MCF 10A (cell line): ENCODE measurements at regions of chr10 and their contacts with region 1.

Region 1: GRCh38 chr10:91420868-91421267 is 10.7 kb downstream of the HECTD2 start:
- DNase-seq: peak; percentile 60
- H3K4me3 Mint-ChIP-seq: peak overlapping the region; percentile 8
- H3K27ac Mint-ChIP-seq: no peak overlapping the region
- H3K4me1 Mint-ChIP-seq: peaks cover 13% of the 10 kb centered on the region
- H3K27me3 Mint-ChIP-seq: no peaks in the 10 kb centered on the region
- CTCF ChIP-seq: no peak

Region 2: GRCh38 chr10:91381257-91381891 is 39.5 kb before region 1 on chr10:
- CTCF ChIA-PET with region 1: no interaction called
- POLR2A ChIA-PET with region 1: no interaction called
- intact Hi-C with region 1: no loop called
- DNase-seq: no peak
- H3K4me3 Mint-ChIP-seq: no peak overlapping the region
- H3K27ac Mint-ChIP-seq: no peak overlapping the region
- H3K4me1 Mint-ChIP-seq: no peaks in the 10 kb centered on the region
- H3K27me3 Mint-ChIP-seq: peaks cover 16% of the 10 kb centered on the region
- CTCF ChIP-seq: no peak

Region 3: GRCh38 chr10:91409869-91410637 is 10.8 kb before region 1 on chr10 and contains the start of gene HECTD2:
- CTCF ChIA-PET with region 1: no interaction called
- POLR2A ChIA-PET with region 1: interaction called, 38 read pairs
- intact Hi-C with region 1: no loop called
- DNase-seq: peak; percentile 72
- H3K4me3 Mint-ChIP-seq: peak within 1 kb of the TSS; percentile 95
- H3K27ac Mint-ChIP-seq: peak within 1 kb of the TSS; percentile 99
- H3K4me1 Mint-ChIP-seq: peaks cover 7% of the 10 kb centered on the region
- H3K27me3 Mint-ChIP-seq: no peaks in the 10 kb centered on the region
- CTCF ChIP-seq: peak; percentile 37
- total RNA-seq, gene HECTD2: 5.9 and 8.2 TPM in 2 replicates